CD4-positive, alpha-beta memory T cell (primary cell): ENCODE measurements at regions of chr6 and their contacts with region 1.

Region 1: GRCh38 chr6:39302669-39303424 is 11.4 kb downstream of the KCNK17 start:
- DNase-seq: peak; percentile 72 to 80 (median 76)
- H3K4me3 ChIP-seq: peak overlapping the region in 1 of 2 donors; percentile 30
- H3K4me3 Mint-ChIP-seq: peak overlapping the region; percentile 24 to 82 (median 75)
- H3K27ac ChIP-seq: no peak overlapping the region
- H3K27ac Mint-ChIP-seq: peak overlapping the region in 2 of 7 donors; percentile 68 to 69
- H3K4me1 ChIP-seq: no peaks in the 10 kb centered on the region
- H3K4me1 Mint-ChIP-seq: peaks cover 3 to 12% (median 8%) of the 10 kb centered on the region in 4 donors
- H3K27me3 ChIP-seq: no peaks in the 10 kb centered on the region
- H3K27me3 Mint-ChIP-seq: peaks cover 0 to 1% of the 10 kb centered on the region in 2 donors

Region 2: GRCh38 chr6:38973178-38974054 is 329.4 kb before region 1 on chr6:
- CTCF ChIA-PET with region 1: interaction called, 16 read pairs
- POLR2A ChIA-PET with region 1: no interaction called
- intact Hi-C with region 1: loop called (anchors 1 kb)
- DNase-seq: peak in 4 of 5 donors; percentile 6 to 21 (median 12)
- H3K4me3 ChIP-seq: no peak overlapping the region
- H3K4me3 Mint-ChIP-seq: no peak overlapping the region
- H3K27ac ChIP-seq: no peak overlapping the region
- H3K27ac Mint-ChIP-seq: no peak overlapping the region
- H3K4me1 ChIP-seq: no peaks in the 10 kb centered on the region
- H3K4me1 Mint-ChIP-seq: no peaks in the 10 kb centered on the region
- H3K27me3 ChIP-seq: no peaks in the 10 kb centered on the region
- H3K27me3 Mint-ChIP-seq: peaks cover 12 to 13% of the 10 kb centered on the region in 2 donors

Region 3: DNA sequence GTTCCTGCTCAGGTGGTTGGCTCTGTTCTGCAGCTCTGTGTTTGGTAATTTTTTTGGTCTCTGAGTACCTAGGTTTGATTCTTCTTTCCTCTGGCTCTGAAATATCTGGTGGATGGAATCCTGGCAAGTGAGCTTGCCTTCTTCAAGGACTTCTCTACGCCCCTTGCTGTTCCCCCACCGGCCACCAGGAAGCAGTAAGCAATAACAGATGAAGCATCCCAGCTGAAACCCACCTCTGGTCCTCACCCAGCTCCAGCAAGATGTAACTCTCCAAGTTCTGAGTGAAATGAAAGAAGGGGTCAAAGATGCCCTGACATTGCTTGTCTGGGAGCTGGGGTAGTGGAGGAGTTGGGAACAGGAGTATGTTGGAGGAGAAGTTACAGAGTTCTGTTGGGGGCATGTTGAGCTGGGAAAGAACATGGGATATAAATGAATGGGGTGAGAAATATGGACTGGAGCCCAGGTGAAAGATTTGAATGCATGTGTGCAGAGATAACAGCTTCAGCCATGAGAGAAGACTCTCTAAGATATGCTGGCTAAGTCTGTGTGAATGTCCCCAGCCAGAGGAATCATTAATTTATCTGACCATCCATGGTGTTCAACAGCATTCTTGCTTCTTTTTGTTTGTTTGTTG is 305.6 kb before region 1 on chr6:
- CTCF ChIA-PET with region 1: interaction called, 39 read pairs
- POLR2A ChIA-PET with region 1: no interaction called
- intact Hi-C with region 1: loop called (anchors 1 kb)
- DNase-seq: peak in 1 of 5 donors; percentile 14
- H3K4me3 ChIP-seq: no peak overlapping the region
- H3K4me3 Mint-ChIP-seq: no peak overlapping the region
- H3K27ac ChIP-seq: no peak overlapping the region
- H3K27ac Mint-ChIP-seq: no peak overlapping the region
- H3K4me1 ChIP-seq: no peaks in the 10 kb centered on the region
- H3K4me1 Mint-ChIP-seq: no peaks in the 10 kb centered on the region
- H3K27me3 ChIP-seq: no peaks in the 10 kb centered on the region
- H3K27me3 Mint-ChIP-seq: peaks cover 14 to 43% of the 10 kb centered on the region in 2 donors

Region 4: DNA sequence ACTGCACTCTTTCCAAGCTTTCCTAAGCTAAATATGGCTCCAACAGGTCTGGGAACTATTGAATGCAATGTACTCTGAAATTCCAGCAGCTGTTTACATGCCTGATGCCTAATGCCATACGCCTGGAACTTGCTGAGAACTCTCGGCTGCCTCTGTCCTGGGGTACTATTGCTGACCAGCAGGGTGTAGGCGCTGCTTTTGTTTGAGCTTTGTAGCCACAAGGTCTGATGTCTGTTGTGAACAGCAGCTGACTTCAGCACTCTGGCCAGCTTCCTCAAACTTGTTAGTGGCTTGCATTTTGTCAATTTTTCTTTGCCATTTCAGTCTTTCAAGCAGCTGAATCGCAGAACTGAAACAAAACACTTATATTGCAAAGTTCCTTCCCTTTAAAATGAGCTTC is 214.5 kb before region 1 on chr6:
- CTCF ChIA-PET with region 1: interaction called, 10 read pairs
- POLR2A ChIA-PET with region 1: no interaction called
- intact Hi-C with region 1: no loop called
- DNase-seq: no peak
- H3K4me3 ChIP-seq: no peak overlapping the region
- H3K4me3 Mint-ChIP-seq: no peak overlapping the region
- H3K27ac ChIP-seq: no peak overlapping the region
- H3K27ac Mint-ChIP-seq: no peak overlapping the region
- H3K4me1 ChIP-seq: no peaks in the 10 kb centered on the region
- H3K4me1 Mint-ChIP-seq: peaks cover 1 to 10% (median 5%) of the 10 kb centered on the region in 4 donors
- H3K27me3 ChIP-seq: no peaks in the 10 kb centered on the region
- H3K27me3 Mint-ChIP-seq: peaks cover 26 to 36% of the 10 kb centered on the region in 2 donors

Region 5: DNA sequence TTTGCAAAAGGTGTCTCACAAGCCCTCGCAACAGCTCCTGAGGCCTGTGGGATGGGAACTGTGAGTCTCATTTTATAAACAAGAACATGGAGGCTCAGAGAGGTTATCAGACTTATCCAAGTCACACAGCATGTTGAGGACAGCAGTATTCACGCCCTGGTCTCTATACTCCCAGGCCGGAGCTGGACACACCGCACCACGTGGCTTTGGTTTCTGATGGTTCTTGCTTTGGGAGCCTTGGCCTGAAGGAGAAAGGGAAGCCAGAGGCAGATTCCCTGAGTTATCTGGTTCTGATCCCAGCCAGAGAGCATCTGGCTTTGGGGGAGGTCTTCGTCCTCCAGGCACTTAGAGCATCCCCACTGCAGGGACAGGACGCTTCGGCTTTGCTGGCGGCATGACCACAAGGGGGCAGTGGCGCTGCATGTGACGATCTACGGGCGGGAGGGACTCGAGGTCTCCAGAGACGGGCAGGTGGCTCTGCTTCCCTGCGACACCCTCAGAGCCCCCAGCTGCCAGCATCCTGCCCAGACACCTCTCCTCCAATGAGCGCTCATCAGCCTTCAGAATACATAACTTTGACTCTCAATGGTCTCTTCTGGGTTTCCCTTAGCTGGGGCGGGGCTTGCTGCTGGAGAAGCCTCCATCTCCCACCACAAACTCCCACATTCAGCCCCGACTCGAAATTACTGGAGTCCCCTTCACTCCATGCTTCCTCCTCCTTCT is 136.5 kb before region 1 on chr6:
- CTCF ChIA-PET with region 1: interaction called, 248 read pairs
- POLR2A ChIA-PET with region 1: interaction called, 9 read pairs
- intact Hi-C with region 1: loop called (anchors 1 kb)
- DNase-seq: peak; percentile 60 to 72 (median 62)
- H3K4me3 ChIP-seq: no peak overlapping the region
- H3K4me3 Mint-ChIP-seq: peak overlapping the region in 2 of 8 donors; percentile 58
- H3K27ac ChIP-seq: no peak overlapping the region
- H3K27ac Mint-ChIP-seq: no peak overlapping the region
- H3K4me1 ChIP-seq: peaks cover 4% of the 10 kb centered on the region
- H3K4me1 Mint-ChIP-seq: peaks cover 0 to 4% (median 2%) of the 10 kb centered on the region in 4 donors
- H3K27me3 ChIP-seq: no peaks in the 10 kb centered on the region
- H3K27me3 Mint-ChIP-seq: no peaks in the 10 kb centered on the region

Region 6: GRCh38 chr6:39228992-39229767 is 73.7 kb before region 1 on chr6 and contains the start of gene KCNK5:
- CTCF ChIA-PET with region 1: interaction called, 8 read pairs
- POLR2A ChIA-PET with region 1: no interaction called
- intact Hi-C with region 1: loop called (anchors 1 kb)
- DNase-seq: peak; percentile 46 to 66 (median 51)
- H3K4me3 ChIP-seq: peak within 1 kb of the TSS; percentile 69 to 70
- H3K4me3 Mint-ChIP-seq: peak within 1 kb of the TSS; percentile 58 to 86 (median 78)
- H3K27ac ChIP-seq: no peak within 1 kb of the TSS
- H3K27ac Mint-ChIP-seq: peak within 1 kb of the TSS in 4 of 7 donors; percentile 29 to 88 (median 64)
- H3K4me1 ChIP-seq: peaks cover 54% of the 10 kb centered on the region
- H3K4me1 Mint-ChIP-seq: peaks cover 26 to 54% (median 37%) of the 10 kb centered on the region in 4 donors
- H3K27me3 ChIP-seq: no peaks in the 10 kb centered on the region
- H3K27me3 Mint-ChIP-seq: peaks cover 0 to 2% of the 10 kb centered on the region in 2 donors
- total RNA-seq, gene KCNK5: 0.79 to 0.83 TPM

Region 7: DNA sequence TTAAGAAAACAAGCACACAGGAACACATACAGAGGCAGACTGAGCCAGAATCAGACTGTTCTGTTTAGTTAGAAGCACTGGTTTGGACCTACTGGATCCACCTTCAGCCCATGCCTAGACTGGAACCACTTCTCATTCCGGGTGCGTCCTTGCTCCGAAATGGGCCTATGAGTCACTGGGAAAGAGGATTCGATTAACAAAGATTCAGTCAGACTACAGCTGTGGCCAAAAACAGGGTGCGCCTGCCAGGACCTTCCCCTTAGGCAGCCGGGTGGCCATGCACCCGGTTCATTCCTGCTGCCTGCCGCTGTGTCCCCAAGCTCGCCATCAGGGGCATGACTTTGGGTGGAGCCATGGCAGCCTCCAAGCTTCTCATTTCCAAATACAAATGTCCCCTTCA is 59.0 kb before region 1 on chr6:
- CTCF ChIA-PET with region 1: no interaction called
- POLR2A ChIA-PET with region 1: no interaction called
- intact Hi-C with region 1: no loop called
- DNase-seq: no peak
- H3K4me3 ChIP-seq: no peak overlapping the region
- H3K4me3 Mint-ChIP-seq: no peak overlapping the region
- H3K27ac ChIP-seq: no peak overlapping the region
- H3K27ac Mint-ChIP-seq: no peak overlapping the region
- H3K4me1 ChIP-seq: no peaks in the 10 kb centered on the region
- H3K4me1 Mint-ChIP-seq: peaks cover 4 to 6% (median 6%) of the 10 kb centered on the region in 4 donors
- H3K27me3 ChIP-seq: no peaks in the 10 kb centered on the region
- H3K27me3 Mint-ChIP-seq: peaks cover 0 to 2% of the 10 kb centered on the region in 2 donors